ENCODE measurements at regions of chr14 and their contacts with region 1.

Region 1: GRCh38 chr14:22986508-22987054 is 4.2 kb upstream of the AJUBA start:
- DNase-seq: peak; percentile 94
- ATAC-seq: peak; percentile 58

Region 2: GRCh38 chr14:22929848-22930364 is 56.7 kb before region 1 on chr14:
- intact Hi-C with region 1: loop called (anchors 2 kb)
- DNase-seq: no peak
- ATAC-seq: no peak

Region 3: DNA sequence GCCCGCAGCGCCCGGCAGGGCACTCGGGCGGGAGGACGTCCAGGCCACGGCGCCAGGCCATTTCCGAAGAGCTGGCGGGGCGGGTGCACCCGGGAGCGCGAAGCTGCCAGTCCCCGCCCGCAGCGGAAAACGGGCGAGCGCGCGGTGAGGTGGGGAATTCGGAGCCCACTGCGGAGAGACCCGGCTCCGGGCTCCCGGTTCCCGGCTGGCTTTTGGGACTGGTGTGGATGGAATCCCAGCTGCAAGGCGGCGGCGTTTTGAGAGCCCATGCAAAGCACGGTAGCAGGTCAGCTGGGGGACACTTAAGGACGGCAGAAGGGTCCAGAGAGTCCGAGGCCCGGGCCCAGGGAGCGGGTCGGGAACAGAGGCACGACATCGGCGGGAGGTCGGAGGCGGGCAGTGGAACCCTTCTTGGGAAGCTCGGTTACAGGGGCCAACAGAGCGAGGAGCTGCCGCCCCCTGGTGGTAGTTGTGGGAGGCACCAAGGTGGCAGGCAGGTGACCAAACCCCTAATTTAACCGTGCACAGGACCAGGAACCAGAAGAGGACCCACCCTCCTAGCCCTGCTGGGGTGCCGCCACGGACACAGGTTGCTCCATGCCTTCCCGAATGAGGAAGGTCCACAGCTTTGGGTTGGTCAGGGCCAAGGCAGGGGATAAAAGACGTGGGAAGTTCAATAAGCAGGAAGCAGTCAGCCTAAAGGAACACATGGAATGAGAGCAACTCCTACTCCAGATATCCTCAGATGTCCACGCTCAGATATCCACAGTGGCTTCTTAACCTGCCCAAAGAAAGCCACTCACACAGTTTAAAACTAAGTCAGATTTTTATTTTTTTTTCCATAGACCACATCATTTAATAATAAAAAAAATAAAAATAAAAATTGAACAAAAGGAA is 71.4 kb after region 1 on chr14:
- intact Hi-C with region 1: loop called (anchors 2 kb)
- DNase-seq: peak; percentile 94
- ATAC-seq: peak; percentile 81

Measured in sciatic nerve (tissue), 2 donors.